AG04449 (cell line): ENCODE measurements at regions of chr11 and their contacts with region 1.

Region 1: GRCh38 chr11:72222907-72223614 is 1.5 kb upstream of the INPPL1 start:
- DNase-seq: no peak
- H3K4me3 ChIP-seq: peak overlapping the region; percentile 91
- CTCF ChIP-seq: peak; percentile 35

Region 2: DNA sequence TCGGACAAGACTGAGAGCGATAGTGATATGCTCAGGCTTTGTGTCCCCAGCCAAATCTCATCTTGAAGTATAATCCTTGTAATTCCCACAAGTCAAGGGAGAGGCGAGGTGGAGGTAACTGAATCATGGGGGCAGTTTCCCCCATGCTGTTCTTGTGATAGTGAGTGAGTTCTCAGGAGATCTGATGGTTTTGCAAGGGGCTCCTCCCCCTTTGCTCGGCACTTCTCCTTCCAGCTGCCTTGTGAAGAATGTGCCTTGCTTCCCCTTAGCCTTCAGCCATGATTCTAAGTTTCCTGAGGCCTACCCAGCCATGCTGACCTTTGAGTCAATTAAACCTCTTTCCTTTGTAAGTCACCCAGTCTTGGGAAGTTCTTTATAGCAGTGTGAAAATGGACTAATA is 14.0 kb before region 1 on chr11:
- CTCF ChIA-PET with region 1: interaction called, 15 read pairs
- POLR2A ChIA-PET with region 1: interaction called, 3 read pairs
- DNase-seq: no peak
- H3K4me3 ChIP-seq: no peak overlapping the region
- CTCF ChIP-seq: no peak

Region 3: DNA sequence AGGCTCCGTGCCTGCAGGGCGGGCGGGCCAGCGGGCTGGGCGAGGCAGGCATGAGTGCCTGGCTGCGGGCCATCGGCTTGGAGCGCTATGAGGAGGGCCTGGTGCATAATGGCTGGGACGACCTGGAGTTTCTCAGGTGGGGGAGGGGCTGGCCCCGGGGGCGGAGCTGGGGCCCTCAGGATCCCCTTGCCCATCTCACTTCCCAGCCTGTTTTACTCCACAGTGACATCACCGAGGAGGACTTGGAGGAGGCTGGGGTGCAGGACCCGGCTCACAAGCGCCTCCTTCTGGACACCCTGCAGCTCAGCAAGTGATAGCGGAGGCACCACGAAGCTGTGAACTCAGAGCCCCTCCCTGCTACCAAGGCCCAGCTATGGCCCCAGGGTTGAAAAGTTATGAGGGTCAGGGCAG is 15.0 kb after region 1 on chr11:
- CTCF ChIA-PET with region 1: interaction called, 76 read pairs
- POLR2A ChIA-PET with region 1: interaction called, 16 read pairs
- DNase-seq: no peak
- H3K4me3 ChIP-seq: no peak overlapping the region
- CTCF ChIP-seq: peak; percentile 82

Region 4: GRCh38 chr11:72250661-72251465 is 27.8 kb after region 1 on chr11:
- CTCF ChIA-PET with region 1: no interaction called
- POLR2A ChIA-PET with region 1: no interaction called
- DNase-seq: no peak
- H3K4me3 ChIP-seq: no peak overlapping the region
- CTCF ChIP-seq: no peak